Activated T-helper 1 cell treated with anti-CD3 and anti-CD28 coated beads, Interleukin-12 subunit alpha, Interleukin-12 subunit beta, Interleukin-2, Interleukin-4 antibody, amounts not matched to agents 30 ng/mL and 10 ng/mL and 1 ng/mL, durations not matched to agents 14 hours and 24 hours and 36 hours (primary cell): ENCODE measurements at regions of chr12 and their contacts with region 1.

Region 1: DNA sequence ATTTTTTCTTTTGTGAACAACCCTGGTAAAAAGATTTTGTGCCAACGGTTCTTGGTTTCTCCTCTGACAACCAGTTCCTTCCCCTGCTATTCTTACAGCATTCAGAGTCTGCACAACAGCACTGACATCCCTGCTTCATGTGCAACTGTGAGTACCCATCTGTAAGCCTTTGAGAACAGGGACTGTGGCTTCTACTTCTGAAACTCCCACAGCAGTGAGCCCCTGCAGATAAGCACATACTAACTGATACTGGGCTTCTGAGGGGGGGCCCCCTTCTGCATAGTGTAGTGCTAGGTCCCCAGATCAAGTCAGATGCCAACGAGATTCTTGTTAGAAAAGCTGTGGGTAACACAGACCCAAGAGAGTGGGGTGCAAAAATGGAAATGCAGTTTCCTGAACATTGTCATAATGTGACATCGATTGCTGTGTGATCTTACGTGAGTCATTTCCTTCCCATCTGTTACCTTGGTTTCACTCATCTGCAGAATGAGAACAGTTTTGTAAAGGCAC is 11.1 kb upstream of the NINJ2 start:
- DNase-seq: peak; percentile 73
- H3K4me3 Mint-ChIP-seq: peak overlapping the region; percentile 72
- H3K27ac Mint-ChIP-seq: peak overlapping the region; percentile 89
- H3K4me1 Mint-ChIP-seq: peaks cover 74% of the 10 kb centered on the region
- H3K27me3 Mint-ChIP-seq: no peaks in the 10 kb centered on the region

Region 2: DNA sequence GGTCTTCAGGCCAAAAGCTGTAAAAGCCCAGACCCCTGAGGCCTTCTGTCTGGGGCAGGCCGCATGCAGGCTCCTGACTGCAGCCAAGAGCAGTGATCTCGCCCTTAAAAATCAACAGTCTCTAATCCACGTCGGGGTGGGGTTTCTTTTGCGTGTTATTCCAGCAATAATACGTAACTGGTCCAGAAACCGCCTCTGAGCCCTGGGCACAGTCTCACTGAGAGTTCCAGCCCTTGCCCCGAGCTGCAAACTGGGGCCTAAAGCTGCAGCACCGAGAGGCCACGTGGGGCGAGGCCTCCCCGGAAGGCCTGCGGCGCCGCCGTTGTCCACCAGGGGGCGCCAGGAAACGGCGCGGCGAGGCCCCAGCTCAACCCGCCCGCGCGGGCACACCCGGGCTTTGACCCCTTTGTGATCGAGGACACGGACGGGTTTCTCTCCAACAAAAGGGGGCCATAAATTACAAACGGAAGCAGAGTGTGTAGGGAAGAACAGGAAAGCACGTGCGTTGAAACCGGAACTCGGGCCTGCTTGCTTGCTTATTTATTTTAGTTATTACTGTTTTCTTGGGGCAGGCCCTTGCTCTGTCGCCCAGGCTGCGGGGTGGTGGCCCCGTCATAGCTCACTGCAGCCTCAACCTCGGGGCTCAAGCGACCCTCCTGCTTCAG is 98.2 kb before region 1 on chr12:
- intact Hi-C with region 1: loop called (anchors 1 kb)
- DNase-seq: peak; percentile 81
- H3K4me3 Mint-ChIP-seq: no peak overlapping the region
- H3K27ac Mint-ChIP-seq: peak overlapping the region; percentile 80
- H3K4me1 Mint-ChIP-seq: peaks cover 33% of the 10 kb centered on the region
- H3K27me3 Mint-ChIP-seq: peaks cover 4% of the 10 kb centered on the region

Region 3: DNA sequence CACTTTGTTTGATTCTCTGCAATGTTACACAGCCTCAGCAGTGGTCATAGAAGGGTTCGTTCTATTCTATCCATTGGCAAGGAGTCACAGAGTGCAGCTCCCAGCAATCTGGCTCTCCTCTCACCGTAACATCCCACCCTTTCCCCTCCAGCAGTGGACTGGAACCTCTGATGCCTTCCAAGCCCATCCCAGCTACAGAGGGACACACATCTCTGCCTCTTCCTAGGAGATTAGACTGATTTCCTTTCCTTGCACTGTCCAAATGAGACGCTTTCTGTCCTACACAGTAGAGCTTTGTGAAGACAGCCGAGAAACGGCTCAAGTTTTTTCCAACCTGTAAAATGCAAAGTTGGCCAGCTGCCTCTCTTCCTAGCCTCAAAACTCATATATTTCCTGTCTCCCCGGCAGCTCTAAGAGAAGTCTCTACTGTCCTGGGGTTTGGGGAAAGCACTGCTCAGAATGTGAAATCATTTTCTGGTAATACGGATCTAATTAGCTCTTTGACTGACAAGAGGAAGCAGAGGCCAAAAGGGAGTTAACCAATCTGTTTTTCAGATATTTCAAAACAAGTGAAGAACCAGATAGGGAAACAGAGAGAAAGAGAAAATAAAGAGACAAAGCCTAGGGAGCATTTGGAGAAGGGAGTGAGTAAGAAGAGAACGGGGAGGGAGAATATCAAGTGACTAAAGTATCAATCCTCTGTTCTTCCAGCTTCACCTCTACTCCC is 11.6 kb before region 1 on chr12:
- intact Hi-C with region 1: loop called (anchors 1 kb)
- DNase-seq: no peak
- H3K4me3 Mint-ChIP-seq: peak overlapping the region; percentile 69
- H3K27ac Mint-ChIP-seq: peak overlapping the region; percentile 78
- H3K4me1 Mint-ChIP-seq: peaks cover 56% of the 10 kb centered on the region
- H3K27me3 Mint-ChIP-seq: no peaks in the 10 kb centered on the region

Region 4: DNA sequence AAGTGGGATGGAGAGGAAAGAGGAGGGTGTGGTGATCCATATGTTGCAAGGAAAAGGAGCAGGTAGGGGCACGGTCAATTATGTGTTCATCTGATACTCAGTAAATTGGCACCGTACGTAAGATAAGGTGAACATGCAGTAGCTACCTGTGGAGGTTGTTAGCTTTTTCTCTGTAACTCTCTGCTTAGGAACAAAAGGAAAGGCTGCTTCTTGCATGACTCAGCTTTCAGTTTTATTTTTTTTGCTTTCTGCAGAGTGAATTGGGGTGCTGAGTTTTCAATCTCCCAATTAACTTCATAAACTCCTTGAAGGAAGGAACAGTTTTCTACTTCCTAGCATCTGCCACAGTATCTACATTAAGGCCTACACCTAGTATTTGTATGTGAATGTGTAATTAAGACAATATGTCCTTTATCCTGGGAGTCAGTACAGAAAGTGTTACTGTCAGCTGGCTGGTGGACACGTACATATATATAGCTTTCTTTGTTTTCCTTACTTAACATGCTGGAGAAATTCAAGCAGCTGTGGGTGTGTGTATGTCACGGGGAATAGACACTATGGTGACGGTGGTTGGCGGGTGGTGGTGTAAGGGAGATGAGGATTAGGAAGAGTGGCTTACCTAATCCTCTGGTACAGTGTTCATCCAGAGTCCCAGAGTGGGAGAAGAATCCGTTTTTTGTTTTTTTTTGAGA is 38.0 kb after region 1 on chr12:
- intact Hi-C with region 1: loop called (anchors 1 kb)
- DNase-seq: no peak
- H3K4me3 Mint-ChIP-seq: no peak overlapping the region
- H3K27ac Mint-ChIP-seq: peak overlapping the region; percentile 72
- H3K4me1 Mint-ChIP-seq: peaks cover 37% of the 10 kb centered on the region
- H3K27me3 Mint-ChIP-seq: no peaks in the 10 kb centered on the region

Region 5: GRCh38 chr12:810671-811415 is 136.5 kb after region 1 on chr12:
- intact Hi-C with region 1: loop called (anchors 1 kb)
- DNase-seq: no peak
- H3K4me3 Mint-ChIP-seq: peak overlapping the region; percentile 20
- H3K27ac Mint-ChIP-seq: peak overlapping the region; percentile 75
- H3K4me1 Mint-ChIP-seq: peaks cover 68% of the 10 kb centered on the region
- H3K27me3 Mint-ChIP-seq: no peaks in the 10 kb centered on the region

Region 6: DNA sequence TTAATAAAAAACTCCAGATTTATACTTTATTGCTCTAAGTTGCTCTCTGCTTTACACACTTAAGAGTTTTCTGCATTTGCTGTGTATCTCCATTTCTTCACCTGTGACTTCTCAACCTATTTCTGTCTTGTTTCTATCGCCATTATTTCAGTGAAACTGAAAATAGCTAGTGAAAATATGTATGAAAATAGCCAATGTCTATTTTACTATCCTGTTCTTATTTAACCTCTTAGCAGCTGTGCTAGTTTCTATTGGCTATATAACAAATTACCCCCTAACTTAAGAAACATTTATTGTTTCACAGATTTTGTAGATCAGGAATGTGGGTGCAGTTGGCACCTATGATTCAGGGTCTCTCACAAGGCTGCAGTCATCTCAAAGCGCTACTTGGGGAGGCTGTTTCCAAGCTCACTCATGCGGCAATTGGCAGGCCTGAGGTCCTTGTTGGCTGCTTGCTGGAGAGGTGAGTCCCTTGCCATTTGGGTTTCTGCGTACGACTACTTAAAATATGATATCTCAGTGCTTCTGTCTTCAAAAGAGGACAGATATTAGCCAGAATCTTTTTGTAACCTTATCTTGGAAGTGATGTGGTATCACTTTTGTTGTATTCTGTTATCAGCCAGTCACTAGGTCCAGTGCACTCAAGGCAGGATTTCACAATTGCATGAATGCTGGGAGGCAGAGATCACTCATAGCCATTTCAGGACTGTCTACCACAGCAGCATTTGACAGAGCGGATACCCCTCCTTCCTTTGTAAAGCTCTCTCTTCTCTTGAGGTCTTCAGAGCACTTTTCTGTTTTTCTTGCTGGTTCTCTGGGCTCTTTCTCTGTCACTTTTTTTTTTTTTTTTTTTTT is 323.9 kb after region 1 on chr12:
- intact Hi-C with region 1: no loop called
- DNase-seq: no peak
- H3K4me3 Mint-ChIP-seq: no peak overlapping the region
- H3K27ac Mint-ChIP-seq: no peak overlapping the region
- H3K4me1 Mint-ChIP-seq: peaks cover 9% of the 10 kb centered on the region
- H3K27me3 Mint-ChIP-seq: peaks cover 4% of the 10 kb centered on the region

Region 7: GRCh38 chr12:1047898-1048660 is 373.8 kb after region 1 on chr12:
- intact Hi-C with region 1: no loop called
- DNase-seq: no peak
- H3K4me3 Mint-ChIP-seq: no peak overlapping the region
- H3K27ac Mint-ChIP-seq: no peak overlapping the region
- H3K4me1 Mint-ChIP-seq: peaks cover 7% of the 10 kb centered on the region
- H3K27me3 Mint-ChIP-seq: no peaks in the 10 kb centered on the region